Astrocyte of the cerebellum (primary cell): ENCODE measurements at regions of chr14 and their contacts with region 1.

Region 1: GRCh38 chr14:99879401-99880295 is 86.4 kb downstream of the EML1 start:
- DNase-seq: peak; percentile 60
- H3K4me3 ChIP-seq: no peak overlapping the region
- CTCF ChIP-seq: no peak

Region 2: GRCh38 chr14:99755629-99756603 is 123.7 kb before region 1 on chr14:
- in situ Hi-C with region 1: loop called (anchors 10 kb)
- DNase-seq: peak; percentile 87
- H3K4me3 ChIP-seq: no peak overlapping the region
- CTCF ChIP-seq: no peak

Region 3: DNA sequence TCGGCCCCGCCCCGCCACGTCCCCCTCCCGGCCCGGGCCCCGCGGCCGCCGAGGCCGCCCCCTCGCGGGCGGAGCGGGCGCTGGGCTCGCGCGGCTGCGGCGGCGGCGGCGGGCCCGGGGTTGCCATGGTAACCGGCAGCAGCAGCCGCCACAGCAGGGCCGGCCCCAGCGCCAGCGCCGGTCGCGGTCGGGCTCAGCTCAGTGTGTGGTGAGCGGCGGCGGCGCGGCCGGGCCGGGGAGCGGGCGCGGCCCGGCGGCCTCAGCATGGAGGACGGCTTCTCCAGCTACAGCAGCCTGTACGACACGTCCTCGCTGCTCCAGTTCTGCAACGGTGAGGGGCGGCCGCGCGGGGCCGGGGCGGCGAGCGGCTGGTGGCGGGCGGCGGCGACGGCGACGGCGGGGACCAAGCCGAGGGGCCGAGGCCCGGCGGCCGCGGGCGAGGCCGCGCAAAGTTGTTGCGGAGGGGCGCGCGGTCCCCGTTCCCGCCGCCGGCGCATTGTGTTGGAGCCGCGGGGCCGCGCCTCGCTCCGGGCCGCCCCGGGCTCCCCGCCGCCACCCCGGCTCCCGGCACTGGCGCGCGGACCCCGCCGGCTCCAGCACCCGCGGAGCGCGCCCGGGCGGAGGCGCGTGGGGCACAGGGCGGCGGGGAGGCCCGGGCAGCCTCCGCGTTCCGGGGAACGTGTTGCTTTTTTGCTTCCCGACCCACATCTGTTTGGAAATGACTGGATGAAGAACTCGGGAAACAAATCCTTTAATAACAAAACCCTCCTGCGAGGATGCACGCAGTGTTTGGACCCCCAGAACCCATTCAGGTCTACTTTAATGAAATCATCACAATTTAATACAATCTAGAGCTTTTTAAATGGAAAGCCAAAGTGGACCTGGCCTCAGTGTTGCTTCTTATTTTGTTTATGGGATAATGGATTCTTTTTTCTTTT is 86.2 kb before region 1 on chr14 and contains the start of gene EML1:
- in situ Hi-C with region 1: loop called (anchors 5 kb)
- DNase-seq: peak; percentile 42
- H3K4me3 ChIP-seq: peak within 1 kb of the TSS; percentile 71
- CTCF ChIP-seq: no peak

Region 4: DNA sequence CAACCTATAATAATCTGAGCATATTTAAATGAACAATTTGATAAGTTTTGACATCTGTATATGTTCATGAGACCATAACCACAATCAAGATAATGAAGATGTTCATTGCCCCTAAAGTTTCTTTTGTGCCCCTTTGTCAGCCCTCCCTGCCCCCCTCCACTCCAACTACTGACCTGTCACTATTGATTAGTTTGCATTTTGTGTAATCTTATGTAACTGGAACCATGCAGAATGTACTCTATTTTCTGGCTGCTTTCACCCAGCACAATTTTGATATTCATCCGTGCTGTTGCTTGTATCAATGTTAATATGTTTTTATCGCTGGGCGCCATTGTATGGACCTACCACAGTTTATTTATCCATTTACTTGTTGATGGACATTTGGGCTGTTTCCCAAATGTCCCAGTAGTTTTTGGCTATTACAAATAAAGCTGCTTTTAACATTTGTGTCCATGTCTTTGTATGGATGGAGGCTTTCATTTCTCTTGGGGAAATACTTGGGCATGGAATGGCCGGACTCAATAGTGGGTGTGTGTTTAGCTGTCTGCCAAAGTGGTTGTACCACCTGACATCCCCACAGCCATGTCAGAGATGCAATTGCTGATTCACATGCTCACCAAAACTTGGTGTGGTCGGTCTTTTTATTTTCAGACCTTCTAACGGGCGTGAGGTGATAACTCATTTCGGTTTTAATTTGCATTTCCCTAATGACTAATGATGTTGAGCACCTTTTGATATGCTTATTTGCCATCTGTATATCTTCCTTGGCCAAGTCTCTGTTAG is 47.6 kb before region 1 on chr14:
- in situ Hi-C with region 1: loop called (anchors 5 kb)
- DNase-seq: no peak
- H3K4me3 ChIP-seq: no peak overlapping the region
- CTCF ChIP-seq: no peak

Region 5: GRCh38 chr14:99918781-99919180 is 39.1 kb after region 1 on chr14:
- in situ Hi-C with region 1: no loop called
- DNase-seq: no peak
- H3K4me3 ChIP-seq: no peak overlapping the region
- CTCF ChIP-seq: no peak